Activated CD8-positive, alpha-beta T cell treated with anti-CD3 and anti-CD28 coated beads for 36 hours (primary cell): ENCODE measurements at regions of chr22 and their contacts with region 1.

Region 1: DNA sequence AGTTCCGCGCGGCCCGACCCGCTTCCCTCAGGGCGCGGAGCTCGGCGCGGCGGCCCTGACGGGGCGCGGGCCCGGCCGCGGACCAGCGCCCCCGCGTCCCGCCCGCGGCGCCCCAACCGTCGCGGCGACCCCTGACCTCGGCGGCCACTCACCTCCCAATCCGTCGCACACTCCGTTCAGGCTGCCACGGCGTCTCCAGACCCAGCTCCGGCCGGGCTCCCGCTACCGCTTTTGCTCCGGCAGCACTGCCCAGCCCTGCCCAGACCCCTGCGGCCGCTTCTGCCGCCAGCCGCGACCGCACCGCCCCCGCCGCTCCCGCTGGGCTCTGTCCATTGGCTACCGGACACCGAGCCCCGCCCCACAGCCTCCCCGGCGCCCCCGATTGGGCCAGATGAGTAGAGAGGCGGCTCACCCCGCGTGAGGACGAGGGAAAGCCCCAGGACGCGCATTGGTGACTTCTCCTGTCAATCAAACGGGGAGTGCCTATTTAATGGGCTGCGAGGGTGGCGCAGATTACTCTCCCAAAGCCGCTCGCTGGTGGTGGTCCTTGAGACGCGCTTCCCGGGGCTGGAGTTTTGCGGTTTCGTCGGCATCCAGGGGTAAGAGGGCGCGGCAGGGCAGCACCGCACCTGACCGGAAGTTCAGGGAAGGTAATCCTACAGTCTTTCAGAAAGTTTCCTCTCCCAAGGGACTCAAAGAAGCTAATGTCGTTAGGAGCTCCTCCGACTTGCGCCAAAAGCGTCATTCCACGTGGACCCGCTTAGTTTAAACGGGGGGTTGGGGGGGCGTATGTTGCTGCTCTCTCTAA is at the start of gene PACSIN2:
- DNase-seq: peak; percentile 99
- ATAC-seq: peak; percentile 99
- H3K4me3 Mint-ChIP-seq: peak within 1 kb of the TSS; percentile 97
- H3K27ac Mint-ChIP-seq: peak within 1 kb of the TSS; percentile 91
- H3K4me1 Mint-ChIP-seq: peaks cover 15% of the 10 kb centered on the region
- H3K27me3 Mint-ChIP-seq: no peaks in the 10 kb centered on the region
- CTCF ChIP-seq: no peak
- total RNA-seq, gene PACSIN2: 33.5 to 35.7 TPM

Region 2: GRCh38 chr22:42780070-42780540 is 235.0 kb before region 1 on chr22:
- CTCF ChIA-PET with region 1: no interaction called
- POLR2A ChIA-PET with region 1: no interaction called
- intact Hi-C with region 1: loop called (anchors 10 kb)
- DNase-seq: peak; percentile 69
- ATAC-seq: peak; percentile 68
- H3K4me3 Mint-ChIP-seq: no peak overlapping the region
- H3K27ac Mint-ChIP-seq: no peak overlapping the region
- H3K4me1 Mint-ChIP-seq: no peaks in the 10 kb centered on the region
- H3K27me3 Mint-ChIP-seq: no peaks in the 10 kb centered on the region
- CTCF ChIP-seq: peak; percentile 74

Region 3: DNA sequence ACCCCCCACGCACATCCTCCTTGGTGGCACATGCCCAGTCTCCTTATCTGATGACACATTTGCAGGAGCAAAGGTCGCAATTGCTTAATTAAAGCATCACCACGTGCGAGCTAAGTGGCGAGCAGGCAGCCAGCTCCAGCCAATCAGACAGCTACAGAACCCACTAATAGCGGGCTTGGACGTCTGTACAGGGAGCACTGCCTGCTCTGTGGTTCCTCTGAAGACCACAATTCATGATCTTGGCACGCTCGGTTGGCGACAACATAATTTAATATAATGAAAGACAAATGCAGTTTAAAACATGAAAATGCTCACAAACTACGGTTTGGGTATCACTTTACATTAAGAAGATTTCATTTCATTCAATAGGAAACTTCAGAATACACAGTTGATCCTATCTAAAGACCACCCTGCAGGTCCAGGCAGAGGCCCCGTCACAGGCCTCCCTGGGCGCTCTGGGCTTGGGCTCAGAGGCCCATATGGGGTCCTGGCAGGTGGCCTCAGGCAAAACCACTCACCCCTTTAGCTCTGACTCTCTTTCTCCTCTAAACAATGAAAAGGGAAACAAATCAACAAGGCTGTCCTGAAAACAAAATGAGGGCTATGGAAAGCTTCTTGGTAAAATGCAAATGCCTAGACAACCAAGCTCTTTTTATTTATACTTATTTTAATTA is 10.6 kb before region 1 on chr22:
- CTCF ChIA-PET with region 1: interaction called, 4 read pairs
- POLR2A ChIA-PET with region 1: interaction called, 10 read pairs
- intact Hi-C with region 1: no loop called
- DNase-seq: peak; percentile 53
- ATAC-seq: peak; percentile 23
- H3K4me3 Mint-ChIP-seq: no peak overlapping the region
- H3K27ac Mint-ChIP-seq: peak overlapping the region; percentile 60
- H3K4me1 Mint-ChIP-seq: peaks cover 77% of the 10 kb centered on the region
- H3K27me3 Mint-ChIP-seq: no peaks in the 10 kb centered on the region
- CTCF ChIP-seq: no peak

Region 4: DNA sequence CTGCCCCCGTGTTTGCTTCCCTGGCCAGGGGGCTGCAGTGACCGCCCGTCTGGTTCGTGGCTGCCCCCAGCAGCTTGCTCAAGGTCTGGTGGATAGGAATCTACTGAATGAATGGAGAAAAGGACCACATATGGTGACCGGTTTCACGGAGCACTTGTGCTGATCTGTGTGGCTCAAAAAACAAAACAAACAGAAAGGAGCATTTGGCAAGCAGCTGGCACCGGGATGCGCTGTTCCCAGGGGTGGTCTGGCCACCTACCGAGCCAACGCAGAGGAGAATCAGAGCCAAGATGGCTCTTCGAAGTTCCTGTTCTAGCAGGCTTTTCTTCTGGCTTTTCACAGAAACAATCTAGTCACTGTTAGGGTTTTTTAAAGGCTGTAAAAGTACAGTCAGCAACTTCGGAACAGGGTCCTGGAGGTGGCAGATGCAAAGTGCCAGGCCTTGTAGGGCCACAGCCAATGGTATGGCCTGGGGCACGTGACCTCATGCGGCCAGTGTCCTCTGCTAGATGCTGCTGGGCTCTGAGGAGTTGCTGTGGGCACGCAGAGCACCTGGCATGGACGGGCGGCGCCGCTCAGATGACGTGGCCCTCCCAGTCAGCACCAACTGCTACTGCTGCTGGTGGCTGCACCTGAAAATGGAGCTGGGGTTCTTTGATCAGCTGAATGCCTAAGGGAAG is 27.2 kb after region 1 on chr22:
- CTCF ChIA-PET with region 1: no interaction called
- POLR2A ChIA-PET with region 1: no interaction called
- intact Hi-C with region 1: no loop called
- DNase-seq: no peak
- ATAC-seq: no peak
- H3K4me3 Mint-ChIP-seq: no peak overlapping the region
- H3K27ac Mint-ChIP-seq: no peak overlapping the region
- H3K4me1 Mint-ChIP-seq: no peaks in the 10 kb centered on the region
- H3K27me3 Mint-ChIP-seq: no peaks in the 10 kb centered on the region
- CTCF ChIP-seq: no peak

Region 5: DNA sequence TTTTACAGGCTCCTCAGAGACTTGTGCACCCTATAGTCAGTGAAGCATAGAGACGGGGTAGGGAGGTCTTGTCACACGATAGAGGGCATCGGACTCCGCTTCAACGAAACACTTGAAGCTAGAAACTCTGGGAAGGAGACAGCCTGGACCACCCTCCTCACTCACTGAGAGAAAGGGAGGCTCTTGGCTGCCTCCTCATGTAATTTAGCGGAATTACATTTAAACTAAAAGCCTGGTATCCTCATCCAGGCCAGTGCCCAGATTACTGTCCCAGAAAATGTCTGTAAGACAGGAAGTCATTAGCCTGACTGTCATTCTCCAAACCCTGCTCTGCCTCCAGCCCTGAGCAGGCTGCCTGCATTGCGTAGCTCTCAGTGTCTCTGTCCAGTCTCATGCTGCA is 38.1 kb after region 1 on chr22:
- CTCF ChIA-PET with region 1: no interaction called
- POLR2A ChIA-PET with region 1: no interaction called
- intact Hi-C with region 1: no loop called
- DNase-seq: no peak
- ATAC-seq: no peak
- H3K4me3 Mint-ChIP-seq: no peak overlapping the region
- H3K27ac Mint-ChIP-seq: no peak overlapping the region
- H3K4me1 Mint-ChIP-seq: no peaks in the 10 kb centered on the region
- H3K27me3 Mint-ChIP-seq: no peaks in the 10 kb centered on the region
- CTCF ChIP-seq: peak; percentile 55